ENCODE measurements at regions of chr5 and their contacts with region 1.

Region 1: GRCh38 chr5:103139264-103139865 is 19.3 kb downstream of the PPIP5K2 start:
- DNase-seq: peak; percentile 59 to 89 (median 79)
- ATAC-seq: peak; percentile 77 to 97 (median 89)
- H3K4me3 ChIP-seq: no peak overlapping the region
- H3K4me3 Mint-ChIP-seq: no peak overlapping the region
- H3K27ac ChIP-seq: no peak overlapping the region
- H3K27ac Mint-ChIP-seq: no peak overlapping the region
- H3K4me1 ChIP-seq: no peaks in the 10 kb centered on the region
- H3K4me1 Mint-ChIP-seq: peaks cover 3 to 4% (median 3%) of the 10 kb centered on the region in 3 donors
- H3K27me3 ChIP-seq: no peaks in the 10 kb centered on the region
- H3K27me3 Mint-ChIP-seq: no peaks in the 10 kb centered on the region

Region 2: DNA sequence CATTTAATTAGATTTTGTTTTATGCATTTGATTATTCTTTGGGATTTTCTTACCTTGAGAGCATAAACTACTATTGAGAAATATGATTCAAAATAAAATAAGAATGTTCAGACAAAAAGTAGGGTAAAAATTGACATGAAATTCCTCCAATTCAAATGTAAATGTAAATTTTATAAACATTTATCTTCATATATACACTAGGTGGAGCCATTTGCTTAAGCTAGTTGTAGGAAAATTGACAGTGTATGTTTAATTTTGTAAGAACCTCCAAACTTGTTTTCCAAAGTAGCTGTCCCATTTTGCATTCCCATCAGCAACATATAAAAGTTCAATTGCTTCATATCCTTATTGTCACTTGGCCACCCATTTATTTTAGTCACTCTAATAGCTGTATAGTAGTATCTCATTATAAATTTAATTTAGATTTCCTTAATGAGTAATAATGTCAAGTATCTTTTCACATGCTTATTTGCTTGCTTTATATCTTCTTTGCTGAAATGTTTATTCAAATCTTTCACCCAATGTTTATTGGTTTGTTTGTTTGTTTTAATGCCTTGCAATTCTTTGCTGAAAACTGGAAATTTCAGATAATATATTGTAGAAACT is 602.9 kb before region 1 on chr5:
- CTCF ChIA-PET with region 1: interaction called, 3 to 13 read pairs
- POLR2A ChIA-PET with region 1: no interaction called
- DNase-seq: peak in 1 of 35 experiments; percentile 11
- ATAC-seq: no peak
- H3K4me3 ChIP-seq: no peak overlapping the region
- H3K4me3 Mint-ChIP-seq: no peak overlapping the region
- H3K27ac ChIP-seq: no peak overlapping the region
- H3K27ac Mint-ChIP-seq: no peak overlapping the region
- H3K4me1 ChIP-seq: no peaks in the 10 kb centered on the region
- H3K4me1 Mint-ChIP-seq: no peaks in the 10 kb centered on the region
- H3K27me3 ChIP-seq: no peaks in the 10 kb centered on the region
- H3K27me3 Mint-ChIP-seq: peaks cover 0 to 6% of the 10 kb centered on the region in 2 donors

Region 3: GRCh38 chr5:102681407-102681983 is 457.9 kb before region 1 on chr5:
- CTCF ChIA-PET with region 1: interaction called, 3 to 23 read pairs
- POLR2A ChIA-PET with region 1: no interaction called
- DNase-seq: peak in 29 of 35 experiments; percentile 7 to 70 (median 32)
- ATAC-seq: peak in 3 of 4 experiments; percentile 40 to 52 (median 43)
- H3K4me3 ChIP-seq: no peak overlapping the region
- H3K4me3 Mint-ChIP-seq: no peak overlapping the region
- H3K27ac ChIP-seq: no peak overlapping the region
- H3K27ac Mint-ChIP-seq: no peak overlapping the region
- H3K4me1 ChIP-seq: no peaks in the 10 kb centered on the region
- H3K4me1 Mint-ChIP-seq: no peaks in the 10 kb centered on the region
- H3K27me3 ChIP-seq: no peaks in the 10 kb centered on the region
- H3K27me3 Mint-ChIP-seq: no peaks in the 10 kb centered on the region

Region 4: DNA sequence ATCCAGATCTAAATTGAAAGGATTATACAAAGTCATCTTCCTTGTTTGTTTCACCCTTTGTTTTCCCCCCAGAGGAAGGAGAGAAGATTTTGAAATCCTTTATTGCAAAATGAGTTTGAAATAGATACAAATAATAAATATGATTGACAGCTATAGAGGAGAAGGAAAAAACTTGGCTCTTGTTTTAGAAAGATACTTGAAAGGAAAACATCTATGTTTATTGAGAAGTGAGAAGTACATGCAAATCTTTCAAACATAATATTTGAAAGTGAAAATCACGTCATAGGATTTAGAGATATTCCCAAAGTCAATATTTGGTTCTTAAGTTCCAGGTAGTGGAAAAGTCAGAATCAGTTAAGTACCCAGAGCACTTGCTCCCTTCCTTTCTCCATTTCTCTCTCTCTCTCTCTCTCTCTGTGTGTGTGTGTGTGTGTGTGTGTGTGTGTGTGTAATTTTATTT is 357.0 kb before region 1 on chr5:
- CTCF ChIA-PET with region 1: interaction called, 7 to 28 read pairs
- POLR2A ChIA-PET with region 1: no interaction called
- DNase-seq: no peak
- ATAC-seq: no peak
- H3K4me3 ChIP-seq: no peak overlapping the region
- H3K4me3 Mint-ChIP-seq: no peak overlapping the region
- H3K27ac ChIP-seq: no peak overlapping the region
- H3K27ac Mint-ChIP-seq: no peak overlapping the region
- H3K4me1 ChIP-seq: no peaks in the 10 kb centered on the region
- H3K4me1 Mint-ChIP-seq: peaks cover 10 to 22% (median 20%) of the 10 kb centered on the region in 3 donors
- H3K27me3 ChIP-seq: no peaks in the 10 kb centered on the region
- H3K27me3 Mint-ChIP-seq: peaks cover 0 to 3% of the 10 kb centered on the region in 2 donors

Region 5: DNA sequence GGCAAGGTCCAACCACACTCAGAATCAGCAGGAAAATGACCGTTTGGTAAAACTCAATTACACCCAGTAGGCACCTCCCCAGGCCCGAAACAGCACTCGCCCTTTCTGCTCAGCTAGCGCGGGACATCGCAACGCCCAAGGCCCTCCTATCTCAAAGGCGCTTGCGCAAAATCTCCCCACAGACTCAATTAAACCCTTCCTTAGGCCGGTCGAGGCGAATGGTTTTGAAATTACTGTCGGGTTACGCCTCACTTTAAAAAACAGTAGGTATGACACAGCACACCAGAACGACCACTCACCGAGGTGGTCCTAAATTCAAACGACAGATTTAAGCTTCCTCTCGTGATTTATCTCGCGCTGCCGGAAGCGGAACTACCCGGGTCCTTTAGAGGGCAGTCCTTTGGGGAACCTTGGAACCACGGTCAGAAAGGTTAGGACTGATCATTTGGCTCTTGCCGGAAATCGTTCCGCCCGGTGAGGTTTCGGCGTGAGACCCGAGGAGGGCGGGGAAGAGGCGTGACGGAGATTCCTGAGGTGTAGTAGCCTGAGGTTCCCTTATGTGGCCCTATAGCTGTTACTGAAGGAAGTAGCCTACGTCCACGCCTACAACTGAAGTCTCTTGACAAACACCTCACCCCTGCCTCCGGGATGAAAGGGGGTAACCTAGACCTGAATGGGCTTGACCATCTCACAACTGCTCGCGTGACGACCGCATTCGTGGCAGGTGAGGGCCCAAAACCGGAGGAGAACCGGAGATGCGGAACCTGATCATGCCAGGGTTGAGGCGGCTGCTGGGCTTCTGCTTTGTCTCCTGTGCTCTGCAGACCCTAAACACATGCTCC is 19.4 kb before region 1 on chr5 and contains the starts of genes GIN1 and PPIP5K2:
- CTCF ChIA-PET with region 1: interaction called, 5 to 11 read pairs
- POLR2A ChIA-PET with region 1: no interaction called
- DNase-seq: peak; percentile 91 to 99 (median 97)
- ATAC-seq: peak; percentile 89 to 95 (median 92)
- H3K4me3 ChIP-seq: peak within 1 kb of the TSS; percentile 73 to 94
- H3K4me3 Mint-ChIP-seq: peak within 1 kb of the TSS; percentile 91 to 99 (median 94)
- H3K27ac ChIP-seq: peak within 1 kb of the TSS; percentile 88
- H3K27ac Mint-ChIP-seq: peak within 1 kb of the TSS; percentile 99 to 100
- H3K4me1 ChIP-seq: peaks cover 12 to 19% of the 10 kb centered on the region in 2 experiments
- H3K4me1 Mint-ChIP-seq: peaks cover 62 to 77% (median 65%) of the 10 kb centered on the region in 3 donors
- H3K27me3 ChIP-seq: no peaks in the 10 kb centered on the region
- H3K27me3 Mint-ChIP-seq: no peaks in the 10 kb centered on the region
- total RNA-seq, gene GIN1: 2.6 to 18.8 (median 11.8) TPM
- total RNA-seq, gene PPIP5K2: 40.1 to 63.7 (median 53.3) TPM

Region 6: DNA sequence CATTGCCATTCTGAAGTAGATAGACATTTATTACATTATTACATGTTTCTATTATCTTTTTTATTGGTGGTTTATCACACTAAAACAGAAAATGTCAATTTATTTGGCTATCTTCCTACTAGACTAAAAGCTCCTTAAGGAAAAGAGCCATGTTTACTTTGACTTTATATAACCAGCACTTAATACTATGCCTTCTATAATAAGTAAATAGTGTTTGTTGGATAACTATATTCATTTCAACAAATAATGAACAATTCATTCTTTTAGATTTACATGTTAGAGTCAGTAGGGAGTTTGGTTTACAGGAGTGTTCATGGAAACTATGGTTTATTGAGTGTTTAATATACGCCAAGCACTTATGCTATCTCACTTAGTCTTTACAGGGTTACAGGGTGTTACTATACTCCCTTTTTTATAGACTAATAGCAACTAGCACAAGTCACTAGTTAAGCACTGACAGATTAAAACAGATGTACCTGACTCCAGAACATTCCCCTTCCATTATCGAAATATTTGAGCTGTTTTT is 12.0 kb before region 1 on chr5:
- CTCF ChIA-PET with region 1: interaction called, 5 to 10 read pairs
- POLR2A ChIA-PET with region 1: interaction called in 1 of 2 experiments, 4 read pairs
- DNase-seq: no peak
- ATAC-seq: no peak
- H3K4me3 ChIP-seq: no peak overlapping the region
- H3K4me3 Mint-ChIP-seq: no peak overlapping the region
- H3K27ac ChIP-seq: no peak overlapping the region
- H3K27ac Mint-ChIP-seq: no peak overlapping the region
- H3K4me1 ChIP-seq: peaks cover 2 to 4% of the 10 kb centered on the region in 2 experiments
- H3K4me1 Mint-ChIP-seq: peaks cover 54 to 79% (median 70%) of the 10 kb centered on the region in 3 donors
- H3K27me3 ChIP-seq: no peaks in the 10 kb centered on the region
- H3K27me3 Mint-ChIP-seq: no peaks in the 10 kb centered on the region

Measured in T-cell (primary cell).